ENCODE measurements at regions of chr17 and their contacts with region 1.

Region 1: GRCh38 chr17:29549177-29549923 is 17.5 kb downstream of the ABHD15 start:
- DNase-seq: no peak

Region 2: DNA sequence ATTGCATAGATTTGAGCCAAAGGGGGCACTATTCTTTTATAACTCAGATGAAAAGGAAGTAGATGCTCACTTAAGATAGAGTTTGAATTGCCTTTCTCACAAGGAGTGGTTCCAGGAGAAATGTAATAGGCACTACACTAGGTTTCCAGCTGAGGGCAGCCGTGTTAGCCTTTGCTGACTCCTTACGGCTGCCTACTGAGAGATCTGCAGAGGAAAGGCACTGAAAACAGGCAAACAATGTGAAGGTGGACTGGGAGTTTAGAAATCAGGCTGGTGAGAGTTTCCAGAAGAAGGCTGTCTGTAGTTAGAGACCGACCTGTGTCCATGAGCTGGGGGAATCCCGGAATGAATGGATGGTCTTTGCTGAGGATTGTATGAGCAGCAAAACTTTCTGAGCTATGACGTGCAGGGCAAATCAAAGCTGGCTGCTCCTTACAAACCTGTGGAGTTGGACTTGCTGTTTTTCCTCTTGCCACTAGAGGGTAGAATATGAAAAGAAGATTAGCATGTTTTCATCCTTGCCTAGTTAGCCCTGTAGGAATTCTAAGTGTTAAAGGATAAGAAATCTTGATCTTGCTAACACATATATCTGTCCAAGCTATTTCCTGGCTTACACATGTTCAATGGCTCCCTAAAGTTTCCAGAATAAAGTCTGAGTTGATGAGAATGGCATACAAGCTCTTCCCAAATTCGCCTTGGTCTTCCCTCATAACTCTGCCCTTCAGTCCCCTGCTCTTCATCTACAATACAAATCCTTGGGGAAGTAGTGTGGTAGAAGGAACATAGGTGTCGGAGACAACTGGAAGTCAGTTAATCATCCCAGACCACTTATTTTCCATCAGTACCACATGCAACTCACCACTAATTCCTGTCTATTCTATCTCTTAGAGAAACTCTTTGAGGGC is 179.3 kb before region 1 on chr17:
- in situ Hi-C with region 1: loop called (anchors 25 kb)
- DNase-seq: peak; percentile 84